ENCODE measurements at regions of chr3 and their contacts with region 1.

Region 1: DNA sequence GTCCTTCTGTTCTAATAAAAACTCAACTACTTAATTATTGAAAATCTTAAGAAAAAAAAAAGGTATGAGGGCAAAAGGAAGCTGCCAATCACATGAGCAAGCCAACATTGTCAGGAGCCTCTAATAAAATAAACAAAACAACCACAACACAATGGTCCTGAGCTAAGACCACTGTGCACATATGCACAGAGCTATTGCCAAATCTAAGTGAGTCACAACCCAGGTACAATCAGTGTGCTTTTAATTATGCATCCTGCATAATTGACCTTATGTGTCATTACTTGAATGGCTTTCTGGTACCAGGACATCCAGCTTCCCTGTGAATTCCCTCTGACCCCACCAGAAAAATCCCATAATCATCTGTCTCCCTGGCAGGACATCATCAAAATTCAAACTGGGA is 639.8 kb downstream of the MAGI1 start:
- DNase-seq: peak in 1 of 2 experiments; percentile 42
- H3K4me3 ChIP-seq: no peak overlapping the region
- H3K27ac ChIP-seq: no peak overlapping the region
- H3K4me1 ChIP-seq: no peaks in the 10 kb centered on the region
- H3K27me3 ChIP-seq: no peaks in the 10 kb centered on the region
- CTCF ChIP-seq: no peak

Region 2: DNA sequence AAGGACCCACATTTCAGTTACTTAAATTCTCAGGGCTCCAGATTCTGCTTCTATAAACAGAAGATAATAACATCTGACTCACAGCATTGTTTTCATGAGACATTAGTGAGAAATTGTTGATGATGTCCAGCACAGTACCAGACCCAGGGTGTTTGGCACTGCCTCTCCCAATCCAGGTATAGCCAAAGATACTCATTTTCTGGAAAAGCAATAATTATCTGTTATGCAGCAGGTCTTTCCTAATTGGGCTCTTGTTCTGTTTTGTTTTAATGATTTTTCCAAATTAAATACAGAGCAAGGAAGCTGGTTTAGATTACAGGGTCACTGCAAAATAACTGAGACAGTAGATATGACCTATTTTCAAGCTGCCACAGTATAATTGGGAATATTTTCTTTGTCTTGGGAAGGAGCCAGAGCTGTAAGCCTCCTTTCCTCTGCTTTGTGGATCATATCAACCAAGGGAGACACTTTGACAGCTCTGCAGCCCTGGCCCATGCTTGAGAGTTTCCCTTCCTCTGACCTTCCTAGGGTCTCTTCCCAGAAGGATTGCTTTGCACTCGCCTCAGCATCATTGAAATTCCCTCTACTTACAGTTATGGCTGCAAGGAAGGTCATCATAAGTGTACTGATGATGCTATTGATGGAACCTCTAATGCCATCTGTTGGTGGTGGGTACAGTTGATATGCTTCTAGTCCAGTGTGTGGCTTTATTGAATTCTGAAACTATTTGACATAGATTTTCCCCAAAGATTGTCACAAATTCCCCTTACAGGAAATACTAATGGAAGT is 188.7 kb before region 1 on chr3:
- CTCF ChIA-PET with region 1: interaction called, 12 read pairs
- POLR2A ChIA-PET with region 1: no interaction called
- intact Hi-C with region 1: no loop called
- DNase-seq: no peak
- H3K4me3 ChIP-seq: no peak overlapping the region
- H3K27ac ChIP-seq: no peak overlapping the region
- H3K4me1 ChIP-seq: no peaks in the 10 kb centered on the region
- H3K27me3 ChIP-seq: no peaks in the 10 kb centered on the region
- CTCF ChIP-seq: no peak

Measured in PC-9 (cell line).